Activated naive CD8-positive, alpha-beta T cell treated with anti-CD3 and anti-CD28 coated beads, Interleukin-2, amount 10 ng/mL, durations not matched to agents 7 days and 5 days (primary cell): ENCODE measurements at regions of chr17 and their contacts with region 1.

Region 1: GRCh38 chr17:81702971-81703746 is at the start of gene MRPL12:
- DNase-seq: peak; percentile 93
- ATAC-seq: peak; percentile 85
- H3K4me3 Mint-ChIP-seq: peak within 1 kb of the TSS; percentile 96
- H3K27ac Mint-ChIP-seq: peak within 1 kb of the TSS; percentile 97
- H3K4me1 Mint-ChIP-seq: peaks cover 18% of the 10 kb centered on the region
- H3K27me3 Mint-ChIP-seq: no peaks in the 10 kb centered on the region
- total RNA-seq, gene MRPL12: 55.1 to 59.2 TPM

Region 2: GRCh38 chr17:81512560-81513371 is 190.4 kb before region 1 on chr17 and contains the start of gene ACTG1:
- POLR2A ChIA-PET with region 1: interaction called, 10 read pairs
- DNase-seq: peak; percentile 93
- ATAC-seq: peak; percentile 49
- H3K4me3 Mint-ChIP-seq: peak within 1 kb of the TSS; percentile 93
- H3K27ac Mint-ChIP-seq: peak within 1 kb of the TSS; percentile 90
- H3K4me1 Mint-ChIP-seq: peaks cover 28% of the 10 kb centered on the region
- H3K27me3 Mint-ChIP-seq: no peaks in the 10 kb centered on the region
- total RNA-seq, gene ACTG1: 2,936 to 3,174 TPM

Region 3: GRCh38 chr17:81666342-81667191 is 36.6 kb before region 1 on chr17 and contains the starts of genes CCDC137 and OXLD1:
- POLR2A ChIA-PET with region 1: interaction called, 20 read pairs
- DNase-seq: peak; percentile 93
- ATAC-seq: peak; percentile 89
- H3K4me3 Mint-ChIP-seq: peak within 1 kb of the TSS; percentile 90
- H3K27ac Mint-ChIP-seq: peak within 1 kb of the TSS; percentile 98
- H3K4me1 Mint-ChIP-seq: peaks cover 43% of the 10 kb centered on the region
- H3K27me3 Mint-ChIP-seq: no peaks in the 10 kb centered on the region
- total RNA-seq, gene CCDC137: 31.3 to 32.0 TPM
- total RNA-seq, gene OXLD1: 56.6 to 60.1 TPM

Region 4: GRCh38 chr17:81683584-81684237 is 19.4 kb before region 1 on chr17 and contains the starts of genes ARL16 and HGS:
- POLR2A ChIA-PET with region 1: interaction called, 69 read pairs
- DNase-seq: peak; percentile 98
- ATAC-seq: peak; percentile 98
- H3K4me3 Mint-ChIP-seq: peak within 1 kb of the TSS; percentile 98
- H3K27ac Mint-ChIP-seq: peak within 1 kb of the TSS; percentile 90
- H3K4me1 Mint-ChIP-seq: peaks cover 24% of the 10 kb centered on the region
- H3K27me3 Mint-ChIP-seq: no peaks in the 10 kb centered on the region
- total RNA-seq, gene ARL16: 17.7 to 19.0 TPM
- total RNA-seq, gene HGS: 152 to 164 TPM

Region 5: DNA sequence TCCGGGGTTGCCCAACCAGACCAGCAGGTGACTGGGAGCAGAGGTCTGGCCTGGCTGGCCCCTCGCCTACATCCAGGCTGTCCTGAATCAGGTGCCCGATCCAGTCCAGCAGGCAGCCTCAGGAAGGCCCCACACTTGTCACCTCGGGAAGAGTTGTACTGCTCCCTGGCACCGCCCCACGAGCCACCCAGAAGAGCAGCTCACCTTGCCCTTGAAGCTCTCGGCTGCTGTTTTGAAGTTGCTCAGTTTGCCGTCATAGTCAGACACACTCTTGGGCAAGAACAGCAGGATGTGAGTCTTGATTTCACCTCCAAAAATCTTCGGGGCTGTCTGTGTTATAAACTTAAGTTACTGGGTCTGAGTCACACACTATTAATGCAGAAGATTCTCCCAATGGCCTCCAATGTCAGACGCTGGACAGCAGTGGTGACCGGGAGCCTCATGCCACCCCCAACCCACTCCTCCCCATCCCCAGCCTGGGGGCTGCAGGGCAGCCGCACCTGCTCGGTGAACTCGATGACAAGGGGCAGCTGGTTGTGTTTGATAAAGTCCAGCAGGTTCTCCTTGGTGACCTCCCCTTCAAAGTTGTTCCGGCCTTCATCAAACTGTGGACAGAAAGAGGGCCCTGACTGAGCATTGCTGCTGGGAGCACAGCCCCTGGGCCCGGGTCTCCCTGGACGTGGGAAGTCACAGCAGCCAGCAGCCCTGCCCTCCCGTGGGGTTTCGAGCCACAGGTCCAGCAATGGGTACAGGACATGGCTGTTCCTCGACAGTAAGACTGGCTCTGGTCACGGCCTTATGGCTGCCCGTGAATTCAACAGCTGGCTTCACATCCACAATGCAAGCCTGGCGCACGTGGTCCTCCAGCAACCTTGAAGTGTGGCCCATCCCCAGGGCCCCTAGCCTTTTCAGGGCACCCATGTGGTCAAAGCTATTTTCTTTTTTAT is 143.9 kb after region 1 on chr17:
- POLR2A ChIA-PET with region 1: no interaction called
- DNase-seq: no peak
- ATAC-seq: no peak
- H3K4me3 Mint-ChIP-seq: no peak overlapping the region
- H3K27ac Mint-ChIP-seq: no peak overlapping the region
- H3K4me1 Mint-ChIP-seq: no peaks in the 10 kb centered on the region
- H3K27me3 Mint-ChIP-seq: no peaks in the 10 kb centered on the region

Region 6: DNA sequence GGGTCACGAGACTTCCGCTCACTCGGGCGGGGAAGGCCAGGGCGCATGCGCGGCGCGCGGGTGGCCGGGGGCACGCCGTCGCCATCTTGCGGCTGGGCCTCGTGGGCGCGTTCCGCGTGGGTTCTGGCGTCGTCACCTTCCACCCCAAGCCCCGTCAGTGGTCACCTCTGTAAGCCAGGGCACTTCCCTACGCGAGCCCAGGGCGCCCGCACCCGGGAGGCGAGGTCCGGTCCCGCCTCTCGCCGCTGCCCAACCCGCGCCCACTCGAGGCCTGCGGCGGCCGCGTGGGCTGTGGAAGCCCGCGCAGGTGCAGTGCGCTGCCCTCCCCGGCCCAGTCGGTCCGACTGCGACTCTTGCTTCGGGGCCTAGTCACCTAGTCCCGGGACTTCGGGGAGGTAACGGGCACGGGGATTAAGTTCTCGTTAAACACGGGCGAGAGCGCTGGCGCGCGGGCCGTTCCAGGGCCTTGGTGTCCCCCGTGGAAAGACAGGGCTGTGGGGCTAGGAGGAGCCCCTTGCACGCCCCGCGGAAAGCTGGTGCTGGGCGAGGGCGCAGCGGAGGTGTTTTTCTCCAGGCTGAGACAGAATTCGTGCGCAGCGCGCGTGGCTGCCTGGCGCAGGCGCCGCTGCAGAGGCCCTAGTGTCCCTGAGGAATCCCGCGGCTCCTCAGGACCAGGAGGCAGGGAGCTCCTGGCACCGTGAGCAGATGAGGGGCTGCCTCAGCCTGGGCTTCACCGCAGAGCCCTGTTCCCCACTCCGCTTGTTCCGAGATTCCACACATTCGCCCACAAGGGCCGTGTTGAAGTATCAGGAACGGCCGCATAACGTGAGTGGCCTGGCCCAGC is 168.4 kb after region 1 on chr17:
- POLR2A ChIA-PET with region 1: interaction called, 13 read pairs
- DNase-seq: peak; percentile 99
- ATAC-seq: peak; percentile 17
- H3K4me3 Mint-ChIP-seq: peak overlapping the region; percentile 88
- H3K27ac Mint-ChIP-seq: peak overlapping the region; percentile 97
- H3K4me1 Mint-ChIP-seq: peaks cover 20% of the 10 kb centered on the region
- H3K27me3 Mint-ChIP-seq: no peaks in the 10 kb centered on the region

Region 7: DNA sequence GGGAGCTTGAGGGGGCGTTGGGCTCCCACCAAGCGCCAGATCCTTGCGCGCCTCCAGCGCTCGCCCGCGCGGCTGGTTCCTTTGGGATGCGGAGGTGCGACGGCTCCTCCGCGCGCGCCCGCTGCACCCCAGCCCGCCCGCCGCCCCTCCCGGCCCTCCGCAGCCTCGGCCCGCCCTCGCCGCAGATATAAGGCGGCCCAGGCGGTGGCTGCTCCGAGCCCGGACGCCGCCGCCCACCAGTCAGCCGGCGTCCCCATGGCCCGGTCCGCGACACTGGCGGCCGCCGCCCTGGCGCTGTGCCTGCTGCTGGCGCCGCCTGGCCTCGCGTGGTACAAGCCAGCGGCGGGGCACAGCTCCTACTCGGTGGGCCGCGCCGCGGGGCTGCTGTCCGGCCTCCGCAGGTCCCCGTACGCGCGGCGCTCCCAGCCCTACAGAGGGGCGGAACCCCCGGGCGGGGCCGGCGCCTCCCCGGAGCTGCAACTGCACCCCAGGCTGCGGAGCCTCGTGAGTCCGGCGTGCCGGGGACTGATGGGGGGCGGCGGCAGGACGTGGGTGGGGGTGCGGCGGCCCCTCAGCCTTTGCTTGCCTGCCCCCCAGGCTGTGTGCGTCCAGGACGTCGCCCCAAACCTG is 199.0 kb after region 1 on chr17 and contains the start of gene NPB:
- POLR2A ChIA-PET with region 1: no interaction called
- DNase-seq: no peak
- ATAC-seq: peak; percentile 52
- H3K4me3 Mint-ChIP-seq: no peak within 1 kb of the TSS
- H3K27ac Mint-ChIP-seq: no peak within 1 kb of the TSS
- H3K4me1 Mint-ChIP-seq: peaks cover 2% of the 10 kb centered on the region
- H3K27me3 Mint-ChIP-seq: peaks cover 11% of the 10 kb centered on the region
- total RNA-seq, gene NPB: 0.47 to 1.0 TPM